ENCODE measurements at regions of chr2 and their contacts with region 1.

Region 1: DNA sequence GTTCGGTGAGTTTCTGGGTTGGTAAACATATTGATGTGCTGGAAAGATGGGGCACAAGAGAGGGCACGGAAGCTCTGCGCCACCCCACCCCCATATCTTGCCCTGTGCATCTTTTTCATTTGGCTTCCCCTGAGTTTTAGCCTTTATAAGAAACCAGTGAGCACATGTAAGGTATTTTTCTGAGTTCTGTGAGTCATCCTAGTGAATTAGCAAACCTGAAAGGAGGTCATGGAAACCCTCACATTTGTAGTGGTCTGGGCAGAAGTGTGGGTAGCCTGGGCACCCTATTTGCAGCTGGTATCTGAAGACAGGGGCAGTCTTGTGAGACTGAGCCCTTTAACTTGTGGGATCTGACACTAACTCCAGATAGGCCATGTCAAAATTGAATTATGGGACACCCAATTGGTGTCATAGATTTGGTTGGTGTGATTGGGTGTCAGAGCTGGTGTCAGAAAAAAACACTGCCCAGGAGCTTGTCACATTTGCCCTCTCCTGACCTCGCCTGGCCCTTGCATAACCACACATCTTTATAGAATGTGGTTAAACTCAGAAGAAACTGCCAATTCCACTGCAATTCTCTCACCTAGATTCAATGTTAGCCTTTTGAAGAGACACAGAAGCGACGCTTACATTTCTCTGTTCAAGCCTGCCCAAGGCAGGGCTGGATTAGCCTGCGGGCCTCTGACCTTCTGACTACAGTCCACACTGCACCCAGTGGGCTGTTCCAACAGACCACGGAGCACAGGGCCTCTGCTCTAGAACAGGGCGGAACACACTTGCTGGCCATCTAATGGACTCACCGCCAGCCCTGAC is 12.0 kb upstream of the GALM start:
- DNase-seq: no peak
- ATAC-seq: no peak
- H3K4me3 ChIP-seq: no peak overlapping the region
- H3K27ac ChIP-seq: no peak overlapping the region
- H3K4me1 ChIP-seq: no peaks in the 10 kb centered on the region
- H3K27me3 ChIP-seq: no peaks in the 10 kb centered on the region

Region 2: GRCh38 chr2:38619458-38620164 is 34.3 kb before region 1 on chr2:
- intact Hi-C with region 1: loop called in 1 of 4 experiments (anchors 5 kb)
- DNase-seq: no peak
- ATAC-seq: peak in 1 of 2 donors; percentile 35
- H3K4me3 ChIP-seq: no peak overlapping the region
- H3K27ac ChIP-seq: peak overlapping the region; percentile 17
- H3K4me1 ChIP-seq: no peaks in the 10 kb centered on the region
- H3K27me3 ChIP-seq: no peaks in the 10 kb centered on the region

Measured in right cardiac atrium (tissue), 5 donors.